Heart left ventricle (tissue), 16 donors: ENCODE measurements at regions of chr7 and their contacts with region 1.

Region 1: GRCh38 chr7:100586266-100587025 is at the start of gene FBXO24:
- DNase-seq: peak; percentile 100
- ATAC-seq: peak; percentile 91 to 97 (median 96)
- H3K4me3 ChIP-seq: peak within 1 kb of the TSS; percentile 75 to 100 (median 96)
- H3K27ac ChIP-seq: peak within 1 kb of the TSS; percentile 79 to 99 (median 96)
- H3K4me1 ChIP-seq: peaks cover 6 to 63% (median 41%) of the 10 kb centered on the region in 12 donors
- H3K27me3 ChIP-seq: no peaks in the 10 kb centered on the region
- CTCF ChIP-seq: no peak
- POLR2A ChIP-seq: peak in 1 of 2 donors; percentile 48
- total RNA-seq, gene FBXO24: 0.11 to 0.75 (median 0.48) TPM in 6 of 9 donors, not detected in the others

Region 2: DNA sequence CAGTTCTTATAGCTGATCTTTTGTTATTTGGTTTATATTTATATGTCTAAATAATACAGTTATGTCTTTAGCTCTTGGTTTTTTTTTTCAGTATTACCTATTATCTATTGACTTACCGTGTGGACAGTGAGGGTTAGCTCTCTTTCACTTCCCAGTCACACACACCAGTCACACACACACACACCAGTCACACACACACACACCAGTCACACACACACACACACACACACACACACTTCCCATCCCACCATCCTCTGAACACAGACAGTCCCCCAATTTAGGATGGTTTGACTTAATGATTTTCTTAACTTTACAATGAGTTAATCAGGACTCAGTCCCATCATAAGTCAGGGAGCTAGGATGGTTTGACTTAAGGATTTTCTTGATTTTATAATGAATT is 66.3 kb before region 1 on chr7:
- intact Hi-C with region 1: no loop called
- DNase-seq: no peak
- ATAC-seq: no peak
- H3K4me3 ChIP-seq: no peak overlapping the region
- H3K27ac ChIP-seq: no peak overlapping the region
- H3K4me1 ChIP-seq: peaks cover 0 to 15% (median 0%) of the 10 kb centered on the region in 12 donors
- H3K27me3 ChIP-seq: no peaks in the 10 kb centered on the region
- CTCF ChIP-seq: no peak
- POLR2A ChIP-seq: no peak

Region 3: GRCh38 chr7:100568896-100569844 is 17.3 kb before region 1 on chr7:
- intact Hi-C with region 1: loop called in 1 of 10 experiments (anchors 2 kb)
- DNase-seq: peak in 3 of 5 donors; percentile 45 to 72 (median 56)
- ATAC-seq: peak; percentile 28 to 56 (median 34)
- H3K4me3 ChIP-seq: peak overlapping the region in 11 of 12 donors; percentile 2 to 50 (median 40)
- H3K27ac ChIP-seq: peak overlapping the region in 1 of 12 donors; percentile 24
- H3K4me1 ChIP-seq: peaks cover 0 to 26% (median 13%) of the 10 kb centered on the region in 12 donors
- H3K27me3 ChIP-seq: no peaks in the 10 kb centered on the region
- CTCF ChIP-seq: peak in 9 of 12 donors; percentile 8 to 42 (median 32)
- POLR2A ChIP-seq: no peak

Region 4: DNA sequence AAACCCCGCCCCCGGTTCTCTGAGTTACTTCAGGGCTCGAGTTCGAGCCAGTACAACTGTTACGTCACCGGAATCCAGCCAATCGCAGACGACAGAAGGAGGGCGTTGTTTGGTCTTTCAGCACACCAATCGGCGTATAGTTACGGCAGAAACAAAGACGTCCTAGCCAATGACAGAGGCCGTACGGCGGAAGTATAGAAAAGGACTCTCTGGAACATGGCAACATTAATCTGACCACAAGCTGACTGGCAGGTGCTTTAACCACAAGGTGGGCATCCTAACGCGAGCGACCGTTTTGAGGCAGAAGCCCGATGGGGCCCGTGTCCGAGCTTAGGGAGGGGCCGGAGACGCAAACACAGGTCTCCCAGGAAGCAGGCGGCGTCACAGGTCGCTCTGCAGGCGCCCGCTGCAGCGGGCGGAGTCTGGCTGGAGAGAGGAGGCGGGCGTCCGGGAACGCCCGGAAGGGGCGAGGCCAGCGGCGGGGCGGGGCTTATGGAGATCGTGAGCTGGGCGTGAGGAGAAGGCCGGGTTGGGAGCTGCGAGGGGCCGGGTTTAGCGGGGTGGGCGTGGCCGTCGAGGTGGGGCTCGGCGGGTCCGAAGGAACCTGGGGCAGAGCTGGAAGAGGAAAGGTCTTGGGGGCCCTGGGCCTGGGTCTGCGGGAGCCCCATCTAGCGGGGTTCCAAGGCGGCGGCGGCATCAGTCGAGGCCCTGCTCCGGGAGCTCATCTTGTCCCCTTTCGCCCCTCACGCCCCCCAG is 25.7 kb after region 1 on chr7 and contains the start of gene MOSPD3:
- intact Hi-C with region 1: loop called in 2 of 10 experiments (anchors 1 to 2 kb)
- DNase-seq: peak; percentile 98 to 99 (median 98)
- ATAC-seq: peak; percentile 96 to 98 (median 98)
- H3K4me3 ChIP-seq: peak within 1 kb of the TSS; percentile 54 to 90 (median 76)
- H3K27ac ChIP-seq: peak within 1 kb of the TSS; percentile 75 to 98 (median 94)
- H3K4me1 ChIP-seq: peaks cover 0 to 24% (median 12%) of the 10 kb centered on the region in 12 donors
- H3K27me3 ChIP-seq: no peaks in the 10 kb centered on the region
- CTCF ChIP-seq: no peak
- POLR2A ChIP-seq: peak; percentile 53 to 58
- total RNA-seq, gene MOSPD3: 6.7 to 13.8 (median 10.4) TPM